A549 (cell line): ENCODE measurements at regions of chr9 and their contacts with region 1.

Region 1: GRCh38 chr9:6757456-6758247 is at the start of gene KDM4C:
- DNase-seq: peak; percentile 96 to 98
- ATAC-seq: peak; percentile 88 to 93
- H3K4me3 ChIP-seq: peak within 1 kb of the TSS; percentile 98
- H3K27ac ChIP-seq: peak within 1 kb of the TSS; percentile 87 to 93
- H3K4me1 ChIP-seq: peaks cover 12% of the 10 kb centered on the region; the same call in 2 of the 3 replicates
- CTCF ChIP-seq: no peak
- EP300 ChIP-seq: no peak
- POLR2A ChIP-seq: peak; percentile 83
- RAD21 ChIP-seq: no peak
- polyA plus RNA-seq, gene KDM4C: 15.6 and 16.2 TPM in 2 replicates

Region 2: DNA sequence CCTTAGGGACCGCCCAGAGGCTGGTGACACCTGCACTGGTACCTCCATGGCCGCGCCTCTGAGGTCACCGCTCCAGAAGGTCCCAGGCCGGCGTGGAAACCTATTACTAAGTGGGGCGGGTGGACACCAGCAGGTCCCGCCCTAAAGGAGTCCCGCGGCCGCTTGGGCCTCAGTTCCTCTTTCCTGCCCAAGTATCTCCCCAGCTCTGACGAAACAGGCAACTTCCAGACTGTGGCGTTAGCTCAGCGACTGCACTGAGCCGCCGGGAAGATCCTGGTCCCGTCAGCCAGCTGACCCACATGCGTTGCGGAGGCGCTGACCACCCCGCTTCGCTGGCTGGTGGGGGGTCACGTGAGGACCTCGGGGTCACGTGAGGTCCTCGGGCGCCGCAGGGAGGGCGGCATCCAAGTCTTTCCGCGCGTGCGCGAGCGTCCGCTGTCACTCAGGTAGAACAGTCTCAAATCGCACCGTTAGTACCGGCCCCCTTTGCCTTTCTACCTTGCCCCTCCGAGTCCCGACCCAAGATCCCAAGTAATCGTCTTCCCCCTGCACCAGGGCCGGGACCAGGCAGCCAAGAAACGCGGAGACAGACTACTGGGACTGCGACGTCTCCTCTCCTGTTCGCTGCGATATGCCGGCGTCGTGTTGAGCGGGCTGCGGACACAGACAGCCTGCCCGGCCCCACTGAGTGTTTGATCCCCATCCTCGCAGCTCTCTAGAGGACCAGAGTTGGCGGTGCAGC is 53.6 kb before region 1 on chr9:
- CTCF ChIA-PET with region 1: no interaction called
- POLR2A ChIA-PET with region 1: interaction called, 32 read pairs
- DNase-seq: peak; percentile 92 to 94
- ATAC-seq: peak; percentile 89 to 92
- H3K4me3 ChIP-seq: peak overlapping the region; percentile 65
- H3K27ac ChIP-seq: peak overlapping the region; percentile 92 to 93
- H3K4me1 ChIP-seq: peaks cover 4% of the 10 kb centered on the region; the same call in 2 of the 3 replicates
- CTCF ChIP-seq: no peak
- EP300 ChIP-seq: no peak
- POLR2A ChIP-seq: peak; percentile 90
- RAD21 ChIP-seq: no peak

Region 3: DNA sequence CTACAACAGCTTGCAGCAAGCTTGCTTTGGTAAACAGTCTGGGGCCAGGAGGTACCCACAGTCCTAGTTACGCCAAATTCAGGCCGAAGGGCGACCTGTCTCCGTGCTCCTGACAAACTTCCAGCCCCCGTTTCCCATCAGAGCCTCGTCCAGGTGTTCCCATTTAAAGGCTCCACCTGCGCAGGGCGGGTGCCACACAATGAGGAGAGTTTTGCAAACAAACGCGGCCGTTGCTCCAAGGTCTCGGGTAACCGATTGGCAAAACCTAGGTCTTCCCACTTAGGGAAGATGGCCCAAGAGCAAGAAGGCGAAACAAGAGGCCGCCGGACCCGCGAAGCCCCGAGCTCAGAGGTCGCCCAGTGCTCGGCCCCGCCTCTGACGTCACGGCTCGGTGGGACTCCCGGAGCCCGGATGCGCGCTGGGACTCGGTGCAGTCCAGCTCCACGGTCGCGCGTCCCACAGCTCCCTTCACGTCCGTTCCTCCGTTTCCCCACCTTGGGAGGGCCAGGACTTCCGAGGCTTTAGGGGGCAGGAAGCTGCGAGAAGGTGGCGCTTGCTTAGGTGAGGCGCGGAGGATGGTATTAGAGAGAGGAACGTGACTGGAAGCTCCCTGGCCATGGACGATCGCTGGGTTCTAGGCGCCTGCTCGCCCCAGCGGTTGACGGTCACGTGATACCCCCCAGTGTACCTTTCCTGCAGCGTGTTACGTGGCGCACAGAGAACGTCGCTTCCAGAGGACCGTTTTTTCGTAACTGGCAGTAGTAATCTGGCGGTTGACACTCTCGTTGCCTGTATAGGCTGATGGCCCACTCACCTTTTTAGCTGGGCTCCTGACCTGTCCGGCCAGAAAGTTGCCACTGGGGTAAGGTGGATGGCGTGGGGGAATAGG is 41.7 kb before region 1 on chr9:
- CTCF ChIA-PET with region 1: no interaction called
- POLR2A ChIA-PET with region 1: interaction called, 13 read pairs
- DNase-seq: peak; percentile 28 to 70
- ATAC-seq: peak; percentile 93 to 95
- H3K4me3 ChIP-seq: peak overlapping the region; percentile 52
- H3K27ac ChIP-seq: peak overlapping the region; percentile 62 to 80
- H3K4me1 ChIP-seq: 0 out of 3 replicates have a peak, but pooled peaks cover 3% of the 10 kb centered on the region
- CTCF ChIP-seq: no peak
- EP300 ChIP-seq: no peak
- POLR2A ChIP-seq: peak; percentile 48
- RAD21 ChIP-seq: no peak

Region 4: GRCh38 chr9:6739218-6739617 is 18.4 kb before region 1 on chr9:
- CTCF ChIA-PET with region 1: interaction called, 11 read pairs
- POLR2A ChIA-PET with region 1: interaction called, 13 read pairs
- DNase-seq: peak; percentile 26 to 36
- ATAC-seq: peak; percentile 68 to 78; a peak in 4 of 6 replicates
- H3K4me3 ChIP-seq: no peak overlapping the region
- H3K27ac ChIP-seq: no peak overlapping the region
- H3K4me1 ChIP-seq: no peaks in the 10 kb centered on the region
- CTCF ChIP-seq: peak; percentile 53
- EP300 ChIP-seq: no peak
- POLR2A ChIP-seq: no peak
- RAD21 ChIP-seq: peak; percentile 61 to 66

Region 5: DNA sequence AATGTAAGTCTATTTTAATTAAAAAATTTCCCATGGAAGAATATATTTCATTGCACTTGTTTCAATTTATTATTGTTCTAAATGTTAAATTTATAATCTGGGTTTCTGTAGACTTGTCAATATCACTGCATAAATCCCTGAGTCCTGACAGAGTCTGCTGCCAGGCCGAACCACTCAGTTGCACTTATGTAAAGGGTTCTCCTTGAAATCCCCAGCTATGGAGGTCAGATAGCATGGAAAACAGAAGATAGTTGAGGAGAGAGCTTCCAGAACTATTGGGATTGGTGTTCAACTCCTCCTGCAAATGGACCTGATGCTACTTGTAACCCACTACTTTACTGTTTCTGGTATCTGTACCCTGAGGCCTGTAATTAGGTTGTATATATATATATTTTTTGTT is 37.3 kb after region 1 on chr9:
- CTCF ChIA-PET with region 1: no interaction called
- POLR2A ChIA-PET with region 1: no interaction called
- DNase-seq: no peak
- ATAC-seq: no peak
- H3K4me3 ChIP-seq: no peak overlapping the region
- H3K27ac ChIP-seq: peak overlapping the region in 1 of 2 experiments; percentile 32; a peak in 1 of 6 replicates
- H3K4me1 ChIP-seq: peaks cover 8% of the 10 kb centered on the region
- CTCF ChIP-seq: no peak
- EP300 ChIP-seq: no peak
- POLR2A ChIP-seq: no peak
- RAD21 ChIP-seq: no peak